Panc1 (cell line): ENCODE measurements at regions of chr9 and their contacts with region 1.

Region 1: GRCh38 chr9:72022841-72023240 is 37.6 kb downstream of the C9orf57 start:
- DNase-seq: no peak
- ATAC-seq: no peak
- H3K4me3 ChIP-seq: no peak overlapping the region
- H3K27ac ChIP-seq: peak overlapping the region; percentile 68; the same call in 1 of the 2 replicates
- H3K4me1 ChIP-seq: peaks cover 12% of the 10 kb centered on the region
- H3K27me3 ChIP-seq: no peaks in the 10 kb centered on the region
- CTCF ChIP-seq: no peak

Region 2: GRCh38 chr9:71587576-71588362 is 435.1 kb before region 1 on chr9:
- CTCF ChIA-PET with region 1: interaction called, 10 read pairs
- POLR2A ChIA-PET with region 1: no interaction called
- in situ Hi-C with region 1: no loop called
- intact Hi-C with region 1: no loop called
- DNase-seq: no peak
- ATAC-seq: no peak
- H3K4me3 ChIP-seq: no peak overlapping the region
- H3K27ac ChIP-seq: no peak overlapping the region
- H3K4me1 ChIP-seq: no peaks in the 10 kb centered on the region
- H3K27me3 ChIP-seq: no peaks in the 10 kb centered on the region
- CTCF ChIP-seq: no peak

Region 3: DNA sequence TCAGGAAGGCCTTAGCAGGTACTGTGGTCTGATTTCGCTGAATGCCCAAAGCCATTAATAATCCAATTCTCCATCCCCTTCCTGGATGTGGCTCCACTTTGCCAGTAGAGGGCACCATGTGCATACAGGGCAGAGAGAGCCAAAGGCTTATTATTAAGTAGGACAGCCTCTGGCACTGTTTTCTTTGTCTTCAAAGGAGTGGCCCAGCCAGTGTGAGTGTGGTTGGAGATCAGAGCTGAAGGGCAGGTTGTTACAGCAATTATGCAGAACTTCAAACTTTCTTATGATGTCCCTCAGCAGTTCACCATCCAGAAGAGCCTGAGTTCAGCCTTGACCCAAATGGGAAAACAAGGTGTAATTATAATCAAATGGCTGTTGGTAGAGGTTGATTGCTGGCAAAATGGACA is 215.9 kb before region 1 on chr9:
- CTCF ChIA-PET with region 1: interaction called, 3 read pairs
- POLR2A ChIA-PET with region 1: no interaction called
- in situ Hi-C with region 1: no loop called
- intact Hi-C with region 1: loop called (anchors 5 kb)
- DNase-seq: peak; percentile 51
- ATAC-seq: peak; percentile 97
- H3K4me3 ChIP-seq: no peak overlapping the region
- H3K27ac ChIP-seq: peak overlapping the region; percentile 39; the same call in 1 of the 2 replicates
- H3K4me1 ChIP-seq: peaks cover 7% of the 10 kb centered on the region
- H3K27me3 ChIP-seq: no peaks in the 10 kb centered on the region
- CTCF ChIP-seq: peak; percentile 92

Region 4: GRCh38 chr9:71819115-71819739 is 203.6 kb before region 1 on chr9:
- CTCF ChIA-PET with region 1: interaction called, 10 read pairs
- POLR2A ChIA-PET with region 1: no interaction called
- in situ Hi-C with region 1: no loop called
- intact Hi-C with region 1: no loop called
- DNase-seq: no peak
- ATAC-seq: no peak
- H3K4me3 ChIP-seq: no peak overlapping the region
- H3K27ac ChIP-seq: no peak overlapping the region
- H3K4me1 ChIP-seq: no peaks in the 10 kb centered on the region; the same call in none of the 2 replicates
- H3K27me3 ChIP-seq: no peaks in the 10 kb centered on the region
- CTCF ChIP-seq: peak; percentile 80

Region 5: GRCh38 chr9:71891557-71892189 is 131.2 kb before region 1 on chr9:
- CTCF ChIA-PET with region 1: no interaction called
- POLR2A ChIA-PET with region 1: interaction called, 12 read pairs
- in situ Hi-C with region 1: no loop called
- intact Hi-C with region 1: no loop called
- DNase-seq: no peak
- ATAC-seq: no peak
- H3K4me3 ChIP-seq: no peak overlapping the region
- H3K27ac ChIP-seq: no peak overlapping the region
- H3K4me1 ChIP-seq: no peaks in the 10 kb centered on the region; the same call in 1 of the 2 replicates
- H3K27me3 ChIP-seq: no peaks in the 10 kb centered on the region
- CTCF ChIP-seq: no peak

Region 6: DNA sequence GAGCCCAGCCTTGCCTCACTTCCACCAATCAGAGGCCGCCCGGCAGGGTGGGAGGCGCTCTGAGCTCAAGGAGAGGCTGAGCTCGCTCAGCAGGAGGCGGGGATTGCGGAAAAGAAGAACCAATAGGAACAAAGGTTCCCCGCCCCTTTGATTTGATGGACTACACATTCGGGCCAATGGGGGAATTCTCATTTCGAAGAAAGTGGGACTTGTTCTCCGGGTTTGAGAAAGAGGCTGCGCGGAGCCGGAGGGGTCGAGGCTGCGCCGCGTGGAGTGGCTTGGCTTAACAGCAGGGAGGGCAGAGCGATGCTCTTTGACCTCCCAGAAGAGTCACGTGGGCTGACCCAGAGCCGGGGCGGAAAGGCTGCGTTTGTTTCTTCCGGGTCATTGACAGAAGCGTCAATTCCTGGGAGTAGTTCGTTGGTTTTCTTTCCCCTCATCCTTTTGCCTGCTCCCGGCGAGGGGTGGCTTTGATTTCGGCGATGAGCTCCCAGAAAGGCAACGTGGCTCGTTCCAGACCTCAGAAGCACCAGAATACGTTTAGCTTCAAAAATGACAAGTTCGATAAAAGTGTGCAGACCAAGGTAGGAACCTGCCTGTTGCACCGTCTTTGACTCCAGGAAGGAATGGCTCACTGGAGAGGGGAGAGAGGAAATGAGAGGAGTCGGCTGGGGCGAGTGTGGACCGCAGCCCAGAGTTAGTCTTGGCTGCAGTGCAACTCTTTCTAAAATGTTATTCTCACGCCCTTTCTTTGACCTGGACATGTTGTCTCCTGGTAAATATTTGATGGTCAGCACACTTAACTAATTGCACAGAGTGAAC is 111.4 kb before region 1 on chr9 and contains the start of gene C9orf85:
- CTCF ChIA-PET with region 1: no interaction called
- POLR2A ChIA-PET with region 1: no interaction called
- in situ Hi-C with region 1: no loop called
- intact Hi-C with region 1: loop called (anchors 10 kb)
- DNase-seq: peak; percentile 96
- ATAC-seq: peak; percentile 95
- H3K4me3 ChIP-seq: peak within 1 kb of the TSS; percentile 90 to 97
- H3K27ac ChIP-seq: peak within 1 kb of the TSS; percentile 94
- H3K4me1 ChIP-seq: peaks cover 14% of the 10 kb centered on the region; the same call in 1 of the 2 replicates
- H3K27me3 ChIP-seq: no peaks in the 10 kb centered on the region
- CTCF ChIP-seq: no peak
- total RNA-seq, gene C9orf85: 8.0 TPM